PC-3 (cell line): ENCODE measurements at regions of chr6 and their contacts with region 1.

Region 1: DNA sequence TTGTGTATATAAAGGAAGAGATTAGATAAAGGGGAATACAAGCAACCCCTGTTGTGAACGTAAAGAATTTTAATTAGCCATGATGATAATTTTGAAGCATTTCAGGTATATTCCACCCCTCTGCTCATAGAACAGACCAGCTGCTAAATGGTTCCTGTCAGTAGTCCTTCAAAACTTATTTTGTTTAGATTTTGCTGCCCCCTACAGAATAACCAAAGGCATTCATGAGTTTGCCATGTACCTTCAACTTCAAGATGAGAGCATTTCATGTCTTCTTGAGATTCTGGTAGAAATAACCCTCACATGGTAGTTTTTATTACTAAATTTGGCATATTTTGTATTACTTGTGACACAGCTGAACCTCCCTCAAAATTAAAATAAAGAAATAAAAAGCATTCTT is 1586.7 kb downstream of the HACE1 start:
- DNase-seq: peak; percentile 52
- ATAC-seq: peak; percentile 69
- H3K4me3 ChIP-seq: no peak overlapping the region
- H3K27ac ChIP-seq: no peak overlapping the region
- H3K4me1 ChIP-seq: no peaks in the 10 kb centered on the region
- H3K27me3 ChIP-seq: no peaks in the 10 kb centered on the region
- CTCF ChIP-seq: peak; percentile 56

Region 2: GRCh38 chr6:103002282-103002681 is 270.8 kb before region 1 on chr6:
- CTCF ChIA-PET with region 1: no interaction called
- POLR2A ChIA-PET with region 1: no interaction called
- intact Hi-C with region 1: loop called (anchors 5 kb)
- DNase-seq: peak; percentile 2
- ATAC-seq: peak; percentile 21; the same call in 1 of the 2 replicates
- H3K4me3 ChIP-seq: no peak overlapping the region
- H3K27ac ChIP-seq: no peak overlapping the region
- H3K4me1 ChIP-seq: peaks cover 12% of the 10 kb centered on the region; the same call in 1 of the 2 replicates
- H3K27me3 ChIP-seq: no peaks in the 10 kb centered on the region
- CTCF ChIP-seq: no peak

Region 3: DNA sequence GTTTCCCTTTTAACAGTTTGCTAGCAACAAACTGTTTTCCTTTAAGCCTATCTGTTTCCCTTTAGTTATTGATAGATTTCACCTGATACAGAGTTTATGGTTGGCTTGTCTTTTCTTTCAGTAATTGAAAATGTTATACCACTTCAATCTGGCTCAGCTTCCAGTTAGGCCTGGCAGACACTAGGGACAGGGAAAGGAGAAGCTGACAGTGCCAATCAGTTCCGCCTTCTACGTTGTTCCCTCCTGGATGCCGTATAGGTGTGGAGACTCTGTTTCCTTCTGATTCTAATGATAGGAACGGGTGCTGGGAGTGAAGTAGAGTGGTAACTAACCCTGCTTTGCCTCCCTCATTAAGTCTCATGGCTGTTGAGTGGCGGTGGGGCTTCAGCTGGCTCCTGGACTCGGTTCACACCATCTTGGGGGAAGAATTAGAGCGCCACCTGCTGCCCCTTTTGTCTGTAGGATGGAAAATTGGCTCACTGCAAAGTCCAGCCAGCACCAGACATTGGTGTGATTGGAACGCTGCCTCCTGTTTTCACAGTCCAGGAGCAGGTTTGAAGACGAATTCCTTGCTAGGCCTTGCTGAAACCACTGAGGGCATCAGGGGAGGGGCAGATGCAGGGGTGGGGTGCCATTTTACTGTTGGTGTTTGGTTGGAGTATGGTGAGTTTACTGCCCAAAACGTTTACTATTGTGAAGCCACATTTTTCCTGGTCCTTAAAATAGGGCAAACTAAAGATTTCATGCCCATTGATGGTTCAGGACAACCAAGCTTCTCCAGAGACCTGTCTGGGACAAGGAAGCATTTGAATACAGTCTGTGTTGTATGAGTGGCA is 150.1 kb before region 1 on chr6:
- CTCF ChIA-PET with region 1: no interaction called
- POLR2A ChIA-PET with region 1: no interaction called
- intact Hi-C with region 1: loop called (anchors 10 kb)
- DNase-seq: peak; percentile 62
- ATAC-seq: peak; percentile 80
- H3K4me3 ChIP-seq: no peak overlapping the region
- H3K27ac ChIP-seq: no peak overlapping the region
- H3K4me1 ChIP-seq: no peaks in the 10 kb centered on the region
- H3K27me3 ChIP-seq: no peaks in the 10 kb centered on the region
- CTCF ChIP-seq: peak; percentile 76

Region 4: DNA sequence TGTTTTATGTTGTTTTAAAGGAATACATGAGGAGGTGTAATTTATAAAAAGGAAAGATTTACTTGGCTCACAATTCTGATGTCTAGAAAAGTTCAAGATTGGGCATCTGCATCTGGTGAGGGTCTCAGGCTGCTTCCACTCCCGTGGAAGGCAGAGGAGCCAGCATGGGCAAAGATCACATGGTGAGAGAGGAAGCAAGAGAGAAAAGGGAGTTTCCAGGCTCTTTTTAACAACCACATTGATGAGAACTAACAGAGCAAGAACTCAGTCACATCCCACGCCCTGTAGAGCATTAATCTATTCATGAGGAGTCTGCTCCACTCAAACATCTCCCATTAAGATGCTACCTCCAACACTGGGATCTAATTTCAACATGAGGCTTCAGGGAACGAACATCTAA is 79.6 kb before region 1 on chr6:
- CTCF ChIA-PET with region 1: no interaction called
- POLR2A ChIA-PET with region 1: no interaction called
- intact Hi-C with region 1: no loop called
- DNase-seq: no peak
- ATAC-seq: no peak
- H3K4me3 ChIP-seq: no peak overlapping the region
- H3K27ac ChIP-seq: no peak overlapping the region
- H3K4me1 ChIP-seq: no peaks in the 10 kb centered on the region; the same call in 1 of the 2 replicates
- H3K27me3 ChIP-seq: no peaks in the 10 kb centered on the region
- CTCF ChIP-seq: no peak